CD4-positive, alpha-beta T cell (primary cell): ENCODE measurements at regions of chr10 and their contacts with region 1.

Region 1: GRCh38 chr10:102660888-102661657 is 16.8 kb downstream of the TRIM8 start:
- DNase-seq: peak in 13 of 14 experiments; percentile 33 to 81 (median 46)
- ATAC-seq: peak; percentile 74
- H3K4me3 ChIP-seq: peak overlapping the region; percentile 45
- H3K4me3 Mint-ChIP-seq: peak overlapping the region; percentile 52
- H3K27ac ChIP-seq: peak overlapping the region; percentile 40 to 60
- H3K27ac Mint-ChIP-seq: peak overlapping the region; percentile 82
- H3K4me1 ChIP-seq: peaks cover 52% of the 10 kb centered on the region
- H3K4me1 Mint-ChIP-seq: peaks cover 40% of the 10 kb centered on the region
- H3K27me3 ChIP-seq: no peaks in the 10 kb centered on the region
- H3K27me3 Mint-ChIP-seq: no peaks in the 10 kb centered on the region
- CTCF ChIP-seq: no peak

Region 2: DNA sequence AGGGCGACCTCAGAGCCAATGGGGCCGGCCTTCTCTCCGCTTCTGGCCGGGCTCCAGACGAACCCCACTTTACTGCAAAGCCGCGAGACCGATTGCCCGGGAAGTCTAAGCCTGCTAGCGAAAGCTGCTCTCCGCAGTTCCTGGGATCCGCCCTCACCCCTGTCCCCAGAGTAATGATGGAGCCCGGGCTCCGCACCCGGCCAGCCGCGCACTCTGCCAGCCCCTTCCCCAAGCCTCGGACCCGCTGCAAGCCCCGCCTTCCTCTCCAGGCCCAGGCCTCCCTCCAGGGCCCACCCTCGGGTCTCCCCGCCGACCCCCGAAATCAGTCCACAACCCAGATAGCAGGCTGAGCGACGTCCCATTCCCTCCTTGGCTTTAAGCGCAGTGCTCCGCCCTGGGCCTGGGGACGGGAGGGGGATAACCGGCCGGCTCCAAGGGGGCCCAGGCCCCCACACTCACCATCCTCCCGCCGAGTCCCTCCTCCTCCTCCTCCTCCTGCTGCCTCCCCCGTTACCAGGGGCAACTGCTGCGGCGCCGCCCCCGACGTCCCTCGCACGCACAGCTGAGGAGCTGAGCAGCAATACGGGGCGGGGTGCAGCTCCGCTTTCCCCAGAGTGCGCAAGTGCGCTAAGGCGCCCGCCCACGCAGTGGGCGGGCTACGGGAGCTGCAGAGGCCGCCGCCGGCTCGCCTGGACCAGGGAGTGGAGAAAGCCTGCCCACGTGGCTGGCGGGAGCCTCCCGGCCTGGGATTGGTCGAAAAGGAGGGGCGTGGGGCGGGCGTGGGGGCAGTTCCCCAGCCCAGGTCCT is 52.9 kb after region 1 on chr10 and contains the start of gene ARL3:
- CTCF ChIA-PET with region 1: no interaction called
- POLR2A ChIA-PET with region 1: interaction called, 10 read pairs
- intact Hi-C with region 1: no loop called
- DNase-seq: peak; percentile 82 to 98 (median 92)
- ATAC-seq: peak; percentile 89
- H3K4me3 ChIP-seq: peak within 1 kb of the TSS; percentile 98
- H3K4me3 Mint-ChIP-seq: peak within 1 kb of the TSS; percentile 93
- H3K27ac ChIP-seq: peak within 1 kb of the TSS; percentile 84 to 86
- H3K27ac Mint-ChIP-seq: peak within 1 kb of the TSS; percentile 81
- H3K4me1 ChIP-seq: peaks cover 34% of the 10 kb centered on the region
- H3K4me1 Mint-ChIP-seq: peaks cover 61% of the 10 kb centered on the region
- H3K27me3 ChIP-seq: no peaks in the 10 kb centered on the region
- H3K27me3 Mint-ChIP-seq: no peaks in the 10 kb centered on the region
- CTCF ChIP-seq: peak; percentile 46
- total RNA-seq, gene ARL3: 0.99 to 1.3 TPM